ENCODE measurements at regions of chr11 and their contacts with region 1.

Region 1: GRCh38 chr11:99739464-99740089 is 718.8 kb downstream of the CNTN5 start:
- DNase-seq: peak; percentile 40
- ATAC-seq: peak; percentile 64; the same call in 1 of the 2 replicates
- H3K4me3 ChIP-seq: no peak overlapping the region
- H3K27ac ChIP-seq: no peak overlapping the region
- H3K4me1 ChIP-seq: no peaks in the 10 kb centered on the region
- H3K27me3 ChIP-seq: no peaks in the 10 kb centered on the region
- CTCF ChIP-seq: peak; percentile 76
- POLR2A ChIP-seq: no peak
- RAD21 ChIP-seq: peak; percentile 83

Region 2: GRCh38 chr11:99015634-99016454 is 723.7 kb before region 1 on chr11:
- CTCF ChIA-PET with region 1: interaction called, 6 read pairs
- POLR2A ChIA-PET with region 1: no interaction called
- dilution Hi-C with region 1: no loop called
- in situ Hi-C with region 1: no loop called
- intact Hi-C with region 1: loop called (anchors 2 kb)
- DNase-seq: peak; percentile 51
- ATAC-seq: peak; percentile 78
- H3K4me3 ChIP-seq: no peak overlapping the region
- H3K27ac ChIP-seq: no peak overlapping the region
- H3K4me1 ChIP-seq: no peaks in the 10 kb centered on the region; the same call in 1 of the 2 replicates
- H3K27me3 ChIP-seq: peaks cover 7% of the 10 kb centered on the region
- CTCF ChIP-seq: peak; percentile 84
- POLR2A ChIP-seq: no peak
- RAD21 ChIP-seq: peak; percentile 83

Measured in IMR-90 (cell line).